CD8-positive, alpha-beta T cell (primary cell): ENCODE measurements at regions of chr19 and their contacts with region 1.

Region 1: GRCh38 chr19:45038931-45039893 is at the start of gene CLASRP:
- DNase-seq: peak; percentile 73 to 94 (median 89)
- ATAC-seq: peak; percentile 89
- H3K4me3 ChIP-seq: peak within 1 kb of the TSS; percentile 86 to 89
- H3K4me3 Mint-ChIP-seq: peak within 1 kb of the TSS; percentile 93
- H3K27ac ChIP-seq: peak within 1 kb of the TSS; percentile 92 to 96
- H3K27ac Mint-ChIP-seq: peak within 1 kb of the TSS; percentile 90
- H3K4me1 ChIP-seq: peaks cover 23% of the 10 kb centered on the region
- H3K4me1 Mint-ChIP-seq: peaks cover 32% of the 10 kb centered on the region
- H3K27me3 ChIP-seq: no peaks in the 10 kb centered on the region
- H3K27me3 Mint-ChIP-seq: no peaks in the 10 kb centered on the region
- CTCF ChIP-seq: no peak
- total RNA-seq, gene CLASRP: 144 to 153 TPM

Region 2: GRCh38 chr19:44845612-44846454 is 193.4 kb before region 1 on chr19 and contains the start of gene NECTIN2:
- CTCF ChIA-PET with region 1: no interaction called
- POLR2A ChIA-PET with region 1: no interaction called
- intact Hi-C with region 1: no loop called
- DNase-seq: peak; percentile 47 to 85 (median 71)
- ATAC-seq: peak; percentile 68
- H3K4me3 ChIP-seq: peak within 1 kb of the TSS; percentile 39 to 46
- H3K4me3 Mint-ChIP-seq: peak within 1 kb of the TSS; percentile 96
- H3K27ac ChIP-seq: no peak within 1 kb of the TSS
- H3K27ac Mint-ChIP-seq: peak within 1 kb of the TSS; percentile 55
- H3K4me1 ChIP-seq: peaks cover 45% of the 10 kb centered on the region
- H3K4me1 Mint-ChIP-seq: peaks cover 26% of the 10 kb centered on the region
- H3K27me3 ChIP-seq: peaks cover 0 to 18% of the 10 kb centered on the region in 2 experiments
- H3K27me3 Mint-ChIP-seq: peaks cover 19% of the 10 kb centered on the region
- CTCF ChIP-seq: peak; percentile 36
- total RNA-seq, gene NECTIN2: 2.0 to 2.5 TPM

Region 3: GRCh38 chr19:45016388-45017319 is 22.6 kb before region 1 on chr19:
- CTCF ChIA-PET with region 1: no interaction called
- POLR2A ChIA-PET with region 1: no interaction called
- intact Hi-C with region 1: loop called in 1 of 2 experiments (anchors 2 kb)
- DNase-seq: peak; percentile 54 to 95 (median 73)
- ATAC-seq: peak; percentile 85
- H3K4me3 ChIP-seq: peak overlapping the region in 1 of 2 experiments; percentile 9
- H3K4me3 Mint-ChIP-seq: peak overlapping the region; percentile 42
- H3K27ac ChIP-seq: peak overlapping the region; percentile 44 to 82
- H3K27ac Mint-ChIP-seq: peak overlapping the region; percentile 87
- H3K4me1 ChIP-seq: peaks cover 3% of the 10 kb centered on the region
- H3K4me1 Mint-ChIP-seq: peaks cover 13% of the 10 kb centered on the region
- H3K27me3 ChIP-seq: no peaks in the 10 kb centered on the region
- H3K27me3 Mint-ChIP-seq: no peaks in the 10 kb centered on the region
- CTCF ChIP-seq: peak; percentile 68

Region 4: GRCh38 chr19:45079063-45079910 is 40.1 kb after region 1 on chr19 and contains the start of gene GEMIN7:
- CTCF ChIA-PET with region 1: no interaction called
- POLR2A ChIA-PET with region 1: interaction called, 4 read pairs
- intact Hi-C with region 1: loop called (anchors 1 to 2 kb)
- DNase-seq: peak; percentile 64 to 89 (median 76)
- ATAC-seq: peak; percentile 70
- H3K4me3 ChIP-seq: peak within 1 kb of the TSS; percentile 95 to 98
- H3K4me3 Mint-ChIP-seq: peak within 1 kb of the TSS; percentile 90
- H3K27ac ChIP-seq: peak within 1 kb of the TSS; percentile 77 to 78
- H3K27ac Mint-ChIP-seq: peak within 1 kb of the TSS; percentile 81
- H3K4me1 ChIP-seq: peaks cover 46% of the 10 kb centered on the region
- H3K4me1 Mint-ChIP-seq: peaks cover 45% of the 10 kb centered on the region
- H3K27me3 ChIP-seq: no peaks in the 10 kb centered on the region
- H3K27me3 Mint-ChIP-seq: no peaks in the 10 kb centered on the region
- CTCF ChIP-seq: no peak
- total RNA-seq, gene GEMIN7: 7.2 to 7.7 TPM